ENCODE measurements at regions of chr10 and their contacts with region 1.

Region 1: GRCh38 chr10:62480196-62480595 is 106.0 kb downstream of the ZNF365 start:
- DNase-seq: no peak
- CTCF ChIP-seq: no peak

Region 2: DNA sequence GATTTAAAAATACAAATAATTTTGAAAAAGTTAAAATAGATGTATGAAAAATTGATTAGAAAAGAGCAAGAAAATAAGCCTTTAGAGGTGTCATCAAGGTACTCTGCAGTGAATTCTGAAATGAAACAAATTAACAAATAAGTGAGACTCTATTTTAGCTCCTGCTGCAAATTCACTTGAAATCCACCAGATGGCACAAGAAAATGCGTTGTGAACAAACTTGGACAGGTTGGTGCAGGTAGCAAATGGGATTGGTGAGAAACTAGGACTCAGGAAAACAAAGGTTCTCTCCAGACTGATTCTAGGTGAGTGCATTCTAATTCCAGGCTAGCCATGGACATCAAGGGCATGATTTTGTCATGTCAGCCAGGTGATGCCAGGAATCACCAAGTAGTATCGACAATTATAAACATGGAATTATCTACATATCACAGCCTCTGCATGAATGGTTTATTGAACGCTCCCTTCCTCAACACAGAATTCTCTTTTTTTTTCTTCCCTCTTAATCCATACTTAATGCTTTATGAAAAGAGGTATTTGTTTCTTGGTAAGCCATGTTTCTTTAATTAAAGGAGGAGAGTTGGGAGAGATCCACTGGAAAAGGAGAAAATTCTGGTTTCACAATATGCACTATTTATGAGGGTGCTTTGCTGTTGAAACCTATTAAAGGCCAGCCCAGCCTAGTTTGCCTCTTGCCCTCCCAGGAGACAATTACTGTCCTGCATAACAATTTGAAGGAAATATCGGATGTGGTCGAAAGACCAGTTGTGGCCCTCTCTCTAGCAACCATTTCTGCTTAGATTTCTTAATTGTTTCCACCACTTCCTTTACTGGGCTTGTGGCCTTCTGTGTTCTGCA is 12.0 kb after region 1 on chr10:
- CTCF ChIA-PET with region 1: interaction called, 20 read pairs
- POLR2A ChIA-PET with region 1: no interaction called
- DNase-seq: peak; percentile 34
- CTCF ChIP-seq: peak; percentile 63

Region 3: DNA sequence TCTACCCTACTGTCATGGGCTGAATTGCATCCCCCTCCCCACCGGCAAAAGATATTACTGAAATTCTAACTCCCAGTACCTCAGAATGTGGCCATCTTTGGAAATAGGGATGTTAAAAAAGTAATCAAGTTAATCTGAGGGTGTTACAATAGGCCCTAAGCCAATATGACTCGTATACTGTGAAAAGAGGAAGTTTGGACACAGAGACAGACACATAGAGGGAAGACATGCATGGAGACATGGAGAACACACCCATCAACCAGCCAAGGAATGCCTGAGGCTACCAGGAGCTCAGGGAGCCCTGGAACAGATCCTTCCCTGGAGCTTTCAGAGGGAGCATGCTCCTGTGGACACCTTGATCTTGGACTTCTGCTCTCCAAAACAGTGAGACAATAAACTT is 186.1 kb after region 1 on chr10:
- CTCF ChIA-PET with region 1: no interaction called
- POLR2A ChIA-PET with region 1: no interaction called
- DNase-seq: no peak
- CTCF ChIP-seq: no peak

Measured in GM10248 (cell line).